Activated CD4-positive, alpha-beta memory T cell treated with anti-CD3 and anti-CD28 coated beads for 36 hours (primary cell): ENCODE measurements at regions of chr2 and their contacts with region 1.

Region 1: DNA sequence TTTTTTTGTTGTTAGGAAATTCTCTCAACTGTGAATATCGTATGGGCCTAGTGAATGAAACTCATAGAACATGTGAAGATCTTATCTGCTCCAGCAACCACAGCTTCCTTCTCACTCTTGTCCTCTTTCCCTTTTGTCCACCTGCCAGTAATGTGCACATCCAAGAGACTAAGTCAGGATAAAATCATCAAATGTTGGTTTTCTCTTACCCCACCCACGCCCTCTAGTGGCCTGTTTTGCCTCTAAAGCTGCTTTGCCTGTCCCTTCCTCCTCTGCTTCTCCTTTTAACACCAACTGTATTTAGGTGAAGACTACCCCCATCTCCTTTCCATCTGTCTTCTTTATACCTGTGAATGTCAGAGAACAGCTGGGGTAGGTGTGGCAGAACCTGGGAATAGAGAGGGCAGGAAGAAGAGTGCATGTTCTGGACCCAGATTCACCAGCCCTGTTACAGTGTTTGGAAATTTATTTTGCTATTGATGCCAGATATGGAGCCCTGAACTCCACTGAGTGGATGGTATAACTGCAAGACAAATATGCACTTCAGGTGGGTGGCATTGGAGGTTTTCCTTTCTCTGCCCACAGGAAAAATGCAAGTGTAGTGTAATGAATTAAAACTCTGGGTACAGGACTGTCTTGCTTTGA is 8.4 kb upstream of the MGAT5 start:
- DNase-seq: peak; percentile 82
- H3K4me3 Mint-ChIP-seq: no peak overlapping the region
- H3K27ac Mint-ChIP-seq: no peak overlapping the region
- H3K4me1 Mint-ChIP-seq: peaks cover 82% of the 10 kb centered on the region
- H3K27me3 Mint-ChIP-seq: peaks cover 2% of the 10 kb centered on the region

Region 2: DNA sequence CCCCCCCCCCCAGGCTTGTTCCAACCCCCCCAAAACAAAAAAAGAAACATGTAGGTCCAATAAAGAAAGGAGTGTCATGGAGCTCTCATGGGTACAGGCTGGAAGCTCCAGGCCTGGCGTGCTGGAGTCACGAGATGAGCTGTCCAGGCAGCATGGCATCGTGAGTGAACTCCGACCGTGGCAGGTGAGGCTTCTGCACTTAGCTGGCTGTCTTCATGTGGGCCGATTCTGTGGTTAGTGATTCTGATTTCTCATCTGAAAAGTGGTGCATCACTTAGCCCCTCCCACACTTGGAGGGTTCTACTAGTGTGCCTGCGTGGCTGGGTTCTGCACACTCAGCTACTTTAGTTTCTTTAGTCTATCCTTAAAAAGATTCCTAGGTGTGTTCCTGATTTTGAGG is 118.0 kb before region 1 on chr2:
- CTCF ChIA-PET with region 1: interaction called, 26 read pairs
- POLR2A ChIA-PET with region 1: interaction called, 10 read pairs
- intact Hi-C with region 1: no loop called
- DNase-seq: peak; percentile 86
- H3K4me3 Mint-ChIP-seq: peak overlapping the region; percentile 25
- H3K27ac Mint-ChIP-seq: no peak overlapping the region
- H3K4me1 Mint-ChIP-seq: peaks cover 73% of the 10 kb centered on the region
- H3K27me3 Mint-ChIP-seq: no peaks in the 10 kb centered on the region

Region 3: DNA sequence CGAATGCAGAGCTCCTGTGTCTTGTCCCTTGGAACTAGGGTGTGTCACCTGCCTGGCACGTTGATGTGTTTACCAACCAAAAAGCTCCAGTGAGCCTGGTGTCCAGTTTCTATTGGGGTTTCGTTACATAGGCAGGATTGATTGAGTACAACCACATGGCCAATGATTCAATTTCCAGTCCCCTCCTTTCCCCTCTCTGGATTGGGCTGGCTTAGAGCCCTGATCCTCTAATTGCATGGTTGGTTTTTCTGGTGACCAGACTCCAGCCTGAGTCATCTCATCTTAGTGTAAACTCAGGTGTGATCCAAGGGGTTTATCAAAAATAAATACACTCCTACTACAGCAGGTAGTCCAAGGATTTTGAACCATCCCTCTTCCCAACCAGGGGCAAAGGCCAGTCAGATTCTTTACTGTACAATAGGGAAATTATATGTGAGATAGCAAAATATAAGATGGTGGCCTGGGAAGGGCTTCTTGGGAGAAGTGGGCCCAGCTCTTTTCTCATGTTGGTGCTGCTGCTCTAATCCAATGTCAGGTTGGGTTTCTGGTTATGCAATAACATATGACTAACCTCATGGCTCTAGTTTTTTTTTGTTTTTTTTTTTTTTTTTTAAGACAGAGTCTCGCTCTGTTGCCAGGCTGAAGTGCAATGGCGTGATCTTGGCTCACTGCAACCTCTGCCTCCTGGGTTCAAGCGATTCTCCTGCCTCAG is 56.3 kb before region 1 on chr2:
- CTCF ChIA-PET with region 1: no interaction called
- POLR2A ChIA-PET with region 1: no interaction called
- intact Hi-C with region 1: no loop called
- DNase-seq: no peak
- H3K4me3 Mint-ChIP-seq: no peak overlapping the region
- H3K27ac Mint-ChIP-seq: no peak overlapping the region
- H3K4me1 Mint-ChIP-seq: peaks cover 53% of the 10 kb centered on the region
- H3K27me3 Mint-ChIP-seq: no peaks in the 10 kb centered on the region

Region 4: GRCh38 chr2:134218930-134219658 is 26.4 kb before region 1 on chr2:
- CTCF ChIA-PET with region 1: interaction called, 16 read pairs
- POLR2A ChIA-PET with region 1: interaction called, 10 read pairs
- intact Hi-C with region 1: loop called (anchors 1 kb)
- DNase-seq: peak; percentile 56
- H3K4me3 Mint-ChIP-seq: peak overlapping the region; percentile 49
- H3K27ac Mint-ChIP-seq: peak overlapping the region; percentile 74
- H3K4me1 Mint-ChIP-seq: peaks cover 67% of the 10 kb centered on the region
- H3K27me3 Mint-ChIP-seq: no peaks in the 10 kb centered on the region

Region 5: DNA sequence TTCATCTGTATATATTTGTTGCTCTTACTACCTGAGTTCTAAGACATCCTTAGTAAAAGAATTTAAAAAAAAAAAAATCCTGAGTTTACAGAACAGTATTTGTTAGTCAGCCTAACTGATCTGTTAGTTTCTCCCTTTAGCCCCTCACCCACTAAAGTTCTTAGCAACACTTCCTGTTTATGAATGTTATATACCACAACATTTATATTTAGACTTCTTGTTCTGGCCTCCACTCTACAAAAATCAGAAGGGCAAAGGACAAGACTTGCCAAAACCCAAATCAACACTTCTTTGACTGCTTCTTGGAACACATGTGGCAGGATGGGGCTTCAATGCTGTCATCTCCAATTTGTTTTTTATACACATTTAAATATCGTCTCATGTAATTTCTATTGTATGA is 79.5 kb after region 1 on chr2:
- CTCF ChIA-PET with region 1: no interaction called
- POLR2A ChIA-PET with region 1: no interaction called
- intact Hi-C with region 1: no loop called
- DNase-seq: no peak
- H3K4me3 Mint-ChIP-seq: no peak overlapping the region
- H3K27ac Mint-ChIP-seq: no peak overlapping the region
- H3K4me1 Mint-ChIP-seq: peaks cover 30% of the 10 kb centered on the region
- H3K27me3 Mint-ChIP-seq: no peaks in the 10 kb centered on the region